K562 (cell line): ENCODE measurements at regions of chr12 and their contacts with region 1.

Region 1: GRCh38 chr12:56041552-56042429 is at the start of gene RPS26:
- DNase-seq: peak; percentile 89 to 100 (median 92)
- ATAC-seq: peak; percentile 90
- H3K4me3 ChIP-seq: peak within 1 kb of the TSS; percentile 83
- H3K27ac ChIP-seq: peak within 1 kb of the TSS; percentile 98
- H3K4me1 ChIP-seq: peaks cover 13 to 25% of the 10 kb centered on the region in 2 experiments; a peak in 3 of 5 replicates
- H3K27me3 ChIP-seq: no peaks in the 10 kb centered on the region
- CTCF ChIP-seq: peak; percentile 42 to 82 (median 73)
- EP300 ChIP-seq: no peak
- POLR2A ChIP-seq: peak; percentile 100
- RAD21 ChIP-seq: peak; percentile 65 to 79
- polyA plus RNA-seq, gene RPS26: 1,319 to 1,589 TPM

Region 2: GRCh38 chr12:55362675-55363074 is 679.1 kb before region 1 on chr12 and contains the start of gene OR6C75:
- CTCF ChIA-PET with region 1: no interaction called
- POLR2A ChIA-PET with region 1: no interaction called
- in situ Hi-C with region 1: no loop called
- intact Hi-C with region 1: no loop called
- DNase-seq: no peak
- ATAC-seq: no peak
- H3K4me3 ChIP-seq: no peak within 1 kb of the TSS
- H3K27ac ChIP-seq: no peak within 1 kb of the TSS
- H3K4me1 ChIP-seq: no peaks in the 10 kb centered on the region
- H3K27me3 ChIP-seq: no peaks in the 10 kb centered on the region
- CTCF ChIP-seq: no peak
- EP300 ChIP-seq: no peak
- POLR2A ChIP-seq: no peak
- RAD21 ChIP-seq: no peak
- polyA plus RNA-seq, gene OR6C75: not detected

Region 3: DNA sequence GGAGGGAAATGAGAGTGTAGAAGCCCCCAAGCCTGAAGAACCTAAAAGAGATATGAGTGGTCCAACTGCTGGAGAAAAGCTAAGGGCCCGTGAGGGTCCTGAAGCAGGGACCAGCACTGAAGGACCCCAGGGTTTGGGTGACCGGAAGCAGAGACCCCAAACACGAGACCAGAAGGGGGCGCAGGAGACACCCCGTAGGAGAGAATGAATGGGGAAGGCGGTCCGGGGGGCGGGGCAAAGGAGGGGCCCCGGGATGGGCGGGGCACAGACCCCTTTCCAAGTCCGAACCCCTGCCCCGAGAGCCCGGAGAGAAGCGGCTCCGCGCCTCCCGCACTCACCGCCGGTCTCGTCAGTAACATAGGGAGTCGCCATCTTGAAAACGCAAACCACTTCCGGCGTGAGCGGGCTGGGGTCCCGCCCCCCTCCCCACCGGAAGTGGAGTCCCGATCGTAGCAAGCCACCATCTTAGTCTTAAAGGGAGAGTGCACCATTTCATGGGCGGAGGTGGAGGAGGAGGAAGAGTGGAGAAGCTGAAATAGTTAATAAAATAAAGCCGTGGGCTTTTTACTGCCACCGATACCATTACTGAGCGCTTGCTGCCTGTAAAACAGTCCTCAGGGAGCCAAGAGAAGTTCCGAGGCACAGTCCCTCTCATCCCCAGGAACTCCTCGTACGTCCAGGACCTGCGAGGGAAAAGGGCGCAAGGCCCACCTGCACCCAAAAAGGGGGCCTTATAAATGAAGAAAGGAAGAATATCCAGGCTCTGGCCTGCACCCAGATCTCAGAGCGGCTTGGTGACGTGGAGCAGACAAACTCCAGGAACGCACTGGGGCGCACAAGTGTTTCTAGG is 114.8 kb before region 1 on chr12:
- CTCF ChIA-PET with region 1: interaction called, 4 read pairs
- POLR2A ChIA-PET with region 1: interaction called, 5 read pairs
- in situ Hi-C with region 1: no loop called
- intact Hi-C with region 1: loop called (anchors 2 kb)
- DNase-seq: peak; percentile 96 to 98 (median 97)
- ATAC-seq: peak; percentile 81
- H3K4me3 ChIP-seq: peak overlapping the region; percentile 69
- H3K27ac ChIP-seq: peak overlapping the region; percentile 95
- H3K4me1 ChIP-seq: peaks cover 21 to 27% of the 10 kb centered on the region in 2 experiments; a peak in 4 of 5 replicates
- H3K27me3 ChIP-seq: no peaks in the 10 kb centered on the region
- CTCF ChIP-seq: peak; percentile 68 to 77 (median 68)
- EP300 ChIP-seq: no peak; the same call in 1 of the 2 replicates
- POLR2A ChIP-seq: no peak; the same call in 1 of the 2 replicates
- RAD21 ChIP-seq: peak in 1 of 2 experiments; percentile 30; a peak in 2 of 4 replicates

Region 4: GRCh38 chr12:55973598-55974307 is 68.0 kb before region 1 on chr12 and contains the start of gene RAB5B:
- CTCF ChIA-PET with region 1: no interaction called
- POLR2A ChIA-PET with region 1: interaction called, 11 read pairs
- in situ Hi-C with region 1: no loop called
- intact Hi-C with region 1: no loop called
- DNase-seq: peak; percentile 87 to 100 (median 94)
- ATAC-seq: peak; percentile 95
- H3K4me3 ChIP-seq: peak within 1 kb of the TSS; percentile 68
- H3K27ac ChIP-seq: peak within 1 kb of the TSS; percentile 88
- H3K4me1 ChIP-seq: peaks cover 14 to 21% of the 10 kb centered on the region in 2 experiments
- H3K27me3 ChIP-seq: no peaks in the 10 kb centered on the region
- CTCF ChIP-seq: peak in 1 of 3 experiments; percentile 5; a peak in 1 of 6 replicates
- EP300 ChIP-seq: peak; percentile 7; the same call in 1 of the 2 replicates
- POLR2A ChIP-seq: peak; percentile 90
- RAD21 ChIP-seq: no peak
- polyA plus RNA-seq, gene RAB5B: 6.8 to 12.2 TPM

Region 5: GRCh38 chr12:56053407-56053893 is 11.7 kb after region 1 on chr12:
- CTCF ChIA-PET with region 1: no interaction called
- POLR2A ChIA-PET with region 1: interaction called, 21 read pairs
- in situ Hi-C with region 1: no loop called
- intact Hi-C with region 1: no loop called
- DNase-seq: no peak
- ATAC-seq: no peak
- H3K4me3 ChIP-seq: no peak overlapping the region
- H3K27ac ChIP-seq: no peak overlapping the region
- H3K4me1 ChIP-seq: no peaks in the 10 kb centered on the region
- H3K27me3 ChIP-seq: no peaks in the 10 kb centered on the region
- CTCF ChIP-seq: no peak
- EP300 ChIP-seq: no peak
- POLR2A ChIP-seq: no peak
- RAD21 ChIP-seq: no peak

Region 6: GRCh38 chr12:56224102-56224701 is 182.4 kb after region 1 on chr12 and contains the start of gene NABP2:
- CTCF ChIA-PET with region 1: no interaction called
- POLR2A ChIA-PET with region 1: interaction called, 5 read pairs
- in situ Hi-C with region 1: no loop called
- intact Hi-C with region 1: loop called (anchors 10 kb)
- DNase-seq: peak; percentile 98 to 100 (median 99)
- ATAC-seq: peak; percentile 91
- H3K4me3 ChIP-seq: peak within 1 kb of the TSS; percentile 95
- H3K27ac ChIP-seq: peak within 1 kb of the TSS; percentile 93
- H3K4me1 ChIP-seq: peaks cover 26 to 31% of the 10 kb centered on the region in 2 experiments; a peak in 4 of 5 replicates
- H3K27me3 ChIP-seq: no peaks in the 10 kb centered on the region
- CTCF ChIP-seq: peak; percentile 81 to 96 (median 81)
- EP300 ChIP-seq: 0 out of 2 replicates have a peak, but pooled peaks have one; percentile 29
- POLR2A ChIP-seq: 0 out of 2 replicates have a peak, but pooled peaks have one; percentile 51
- RAD21 ChIP-seq: peak; percentile 77
- polyA plus RNA-seq, gene NABP2: 11.3 to 28.0 TPM